ENCODE measurements at regions of chr5 and their contacts with region 1.

Region 1: DNA sequence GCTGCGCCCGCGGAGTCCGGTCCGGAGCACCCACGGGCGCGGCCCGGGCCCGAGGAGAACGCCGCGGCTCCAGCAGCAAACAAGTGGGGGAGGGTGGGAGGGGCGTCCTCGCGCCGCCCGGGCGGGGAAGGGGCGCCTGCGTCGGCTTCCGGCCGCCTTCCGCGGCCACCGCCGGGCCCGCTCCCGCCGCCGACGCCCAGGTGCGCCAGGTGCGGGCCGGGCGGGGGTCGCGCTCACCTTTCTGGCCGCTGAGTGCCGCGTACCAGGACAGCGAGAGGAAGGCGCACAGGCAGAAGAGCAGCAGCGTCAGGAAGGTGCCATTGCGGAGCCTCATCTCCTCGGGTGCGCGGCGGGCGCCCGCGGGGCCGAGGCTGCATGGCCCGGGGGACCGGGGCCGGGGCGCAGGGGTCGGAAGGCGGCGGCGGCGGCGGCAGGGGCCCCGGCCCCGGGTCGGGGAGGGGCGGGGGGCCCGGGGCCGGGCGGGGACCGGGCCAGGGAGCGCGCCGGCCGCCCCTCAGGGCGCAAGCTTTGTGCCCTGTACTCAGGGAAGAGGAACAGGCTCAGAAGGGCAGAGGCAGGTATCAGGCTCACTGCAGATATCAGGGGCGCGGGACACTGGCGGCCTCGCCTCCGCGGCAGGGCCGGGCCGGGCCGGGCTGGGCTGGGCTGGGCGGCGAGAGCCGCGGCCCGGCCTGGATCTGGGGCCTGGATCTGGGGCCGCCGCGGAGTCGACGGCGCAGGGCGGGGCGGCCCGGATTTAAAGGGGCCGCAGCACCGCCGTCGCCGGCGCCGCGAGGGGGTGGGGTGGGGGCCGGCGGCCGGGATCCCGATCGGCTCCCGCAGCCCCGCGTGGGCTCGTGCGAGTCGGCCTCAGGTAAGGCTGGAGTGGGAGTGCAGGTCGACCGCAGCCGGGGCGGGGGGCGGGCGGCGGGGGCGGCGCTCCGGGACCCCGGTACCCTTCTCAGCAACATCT is at the start of gene MGAT4B:
- DNase-seq: peak; percentile 72
- H3K4me3 Mint-ChIP-seq: peak within 1 kb of the TSS; percentile 86
- H3K27ac Mint-ChIP-seq: peak within 1 kb of the TSS; percentile 71
- H3K4me1 Mint-ChIP-seq: peaks cover 33% of the 10 kb centered on the region
- H3K27me3 Mint-ChIP-seq: no peaks in the 10 kb centered on the region
- total RNA-seq, gene MGAT4B: 95.8 to 96.8 TPM

Region 2: DNA sequence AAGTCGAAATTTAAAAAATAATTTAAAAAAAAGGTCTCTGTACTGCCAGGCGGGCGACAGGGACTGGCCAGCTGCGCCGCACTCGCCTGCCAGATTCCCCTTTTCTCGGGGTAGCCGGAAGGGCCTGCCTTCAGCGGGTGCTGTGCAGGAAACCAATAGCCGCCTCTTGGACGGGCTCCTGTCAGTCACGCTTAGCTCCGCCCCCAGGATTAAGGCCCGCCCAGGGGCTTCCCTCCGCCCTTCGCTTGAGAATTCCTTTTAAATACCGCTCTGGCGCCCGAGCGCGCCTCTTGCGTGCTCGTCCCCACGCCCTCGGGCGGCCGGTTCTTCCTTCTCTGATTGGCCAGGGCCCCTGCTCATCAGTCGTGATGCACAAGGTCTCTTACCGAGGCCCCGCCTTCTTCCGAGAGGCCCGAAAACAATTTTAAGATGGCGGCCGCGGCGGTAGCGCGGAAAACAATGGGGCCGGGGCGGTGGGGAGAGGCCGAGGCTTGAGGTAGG is 74.1 kb before region 1 on chr5 and contains the start of gene MAML1:
- CTCF ChIA-PET with region 1: interaction called, 6 read pairs
- POLR2A ChIA-PET with region 1: interaction called, 3 read pairs
- intact Hi-C with region 1: loop called (anchors 2 kb)
- DNase-seq: peak; percentile 100
- H3K4me3 Mint-ChIP-seq: peak within 1 kb of the TSS; percentile 98
- H3K27ac Mint-ChIP-seq: peak within 1 kb of the TSS; percentile 92
- H3K4me1 Mint-ChIP-seq: peaks cover 42% of the 10 kb centered on the region
- H3K27me3 Mint-ChIP-seq: no peaks in the 10 kb centered on the region
- total RNA-seq, gene MAML1: 20.3 to 22.2 TPM

Region 3: DNA sequence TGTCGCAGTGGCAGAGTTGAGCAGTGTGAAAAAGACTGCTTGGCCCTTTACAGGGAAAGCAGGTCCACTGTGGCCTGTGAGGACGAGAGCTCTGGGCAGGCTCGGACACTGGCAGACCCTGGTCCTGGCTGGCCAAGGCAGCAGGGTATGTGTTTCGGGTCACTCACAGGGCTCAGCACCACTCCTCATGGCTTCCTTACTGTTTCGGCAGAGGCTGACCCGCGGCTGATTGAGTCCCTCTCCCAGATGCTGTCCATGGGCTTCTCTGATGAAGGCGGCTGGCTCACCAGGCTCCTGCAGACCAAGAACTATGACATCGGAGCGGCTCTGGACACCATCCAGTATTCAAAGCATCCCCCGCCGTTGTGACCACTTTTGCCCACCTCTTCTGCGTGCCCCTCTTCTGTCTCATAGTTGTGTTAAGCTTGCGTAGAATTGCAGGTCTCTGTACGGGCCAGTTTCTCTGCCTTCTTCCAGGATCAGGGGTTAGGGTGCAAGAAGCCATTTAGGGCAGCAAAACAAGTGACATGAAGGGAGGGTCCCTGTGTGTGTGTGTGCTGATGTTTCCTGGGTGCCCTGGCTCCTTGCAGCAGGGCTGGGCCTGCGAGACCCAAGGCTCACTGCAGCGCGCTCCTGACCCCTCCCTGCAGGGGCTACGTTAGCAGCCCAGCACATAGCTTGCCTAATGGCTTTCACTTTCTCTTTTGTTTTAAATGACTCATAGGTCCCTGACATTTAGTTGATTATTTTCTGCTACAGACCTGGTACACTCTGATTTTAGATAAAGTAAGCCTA is 29.9 kb after region 1 on chr5:
- CTCF ChIA-PET with region 1: no interaction called
- POLR2A ChIA-PET with region 1: interaction called, 4 read pairs
- intact Hi-C with region 1: loop called (anchors 5 kb)
- DNase-seq: peak; percentile 73
- H3K4me3 Mint-ChIP-seq: peak overlapping the region; percentile 21
- H3K27ac Mint-ChIP-seq: peak overlapping the region; percentile 89
- H3K4me1 Mint-ChIP-seq: peaks cover 18% of the 10 kb centered on the region
- H3K27me3 Mint-ChIP-seq: no peaks in the 10 kb centered on the region

Region 4: DNA sequence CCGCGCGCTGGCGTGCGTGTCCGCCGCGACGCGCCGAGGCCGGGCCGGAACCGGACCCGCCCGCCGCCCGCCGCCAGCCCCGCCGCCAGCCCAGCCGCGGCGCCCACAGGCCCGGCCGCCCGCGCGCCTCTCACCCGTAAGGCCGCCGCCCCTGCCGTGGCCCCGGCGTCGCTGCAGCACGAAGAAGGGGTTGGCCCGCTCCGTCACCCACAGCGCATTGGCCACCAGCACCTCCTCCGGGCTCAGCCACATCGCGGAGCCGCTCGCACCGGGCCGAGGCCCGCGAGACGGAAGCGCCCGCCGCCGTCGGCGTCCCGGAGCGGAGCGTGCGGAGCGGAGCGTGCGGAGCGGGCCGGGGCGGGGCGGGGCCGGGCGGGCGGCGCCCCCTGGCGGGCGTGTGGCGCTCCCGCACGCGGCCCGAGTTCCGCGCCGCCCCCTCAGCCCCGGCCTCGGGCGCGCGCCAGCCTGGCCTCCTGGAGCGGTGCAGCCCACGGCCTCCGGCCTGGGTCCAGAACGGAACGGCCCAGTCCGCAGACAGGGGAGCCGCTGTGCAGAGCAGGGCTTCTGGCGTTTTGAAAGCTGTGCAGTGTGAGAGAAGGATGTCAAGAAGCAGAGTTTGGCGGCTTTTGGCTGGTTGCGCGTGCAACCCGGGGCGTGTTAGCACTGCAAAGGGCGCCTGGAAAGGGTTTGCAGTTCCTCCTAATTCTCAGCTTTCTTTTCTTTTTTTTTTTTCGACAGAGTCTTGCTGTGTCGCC is 101.2 kb after region 1 on chr5 and contains the start of gene TBC1D9B:
- CTCF ChIA-PET with region 1: interaction called, 17 read pairs
- POLR2A ChIA-PET with region 1: interaction called, 3 read pairs
- intact Hi-C with region 1: loop called (anchors 2 kb)
- DNase-seq: peak; percentile 71
- H3K4me3 Mint-ChIP-seq: peak within 1 kb of the TSS; percentile 88
- H3K27ac Mint-ChIP-seq: peak within 1 kb of the TSS; percentile 69
- H3K4me1 Mint-ChIP-seq: peaks cover 14% of the 10 kb centered on the region
- H3K27me3 Mint-ChIP-seq: no peaks in the 10 kb centered on the region
- total RNA-seq, gene TBC1D9B: 59.0 to 62.8 TPM

Region 5: GRCh38 chr5:180090098-180090768 is 283.7 kb after region 1 on chr5:
- CTCF ChIA-PET with region 1: interaction called, 5 read pairs
- POLR2A ChIA-PET with region 1: no interaction called
- intact Hi-C with region 1: loop called (anchors 1 kb)
- DNase-seq: peak; percentile 87
- H3K4me3 Mint-ChIP-seq: peak overlapping the region; percentile 75
- H3K27ac Mint-ChIP-seq: peak overlapping the region; percentile 43
- H3K4me1 Mint-ChIP-seq: peaks cover 15% of the 10 kb centered on the region
- H3K27me3 Mint-ChIP-seq: no peaks in the 10 kb centered on the region

Measured in activated CD4-positive, alpha-beta memory T cell treated with anti-CD3 and anti-CD28 coated beads for 36 hours (primary cell).